ENCODE measurements at regions of chr2 and their contacts with region 1.

Region 1: DNA sequence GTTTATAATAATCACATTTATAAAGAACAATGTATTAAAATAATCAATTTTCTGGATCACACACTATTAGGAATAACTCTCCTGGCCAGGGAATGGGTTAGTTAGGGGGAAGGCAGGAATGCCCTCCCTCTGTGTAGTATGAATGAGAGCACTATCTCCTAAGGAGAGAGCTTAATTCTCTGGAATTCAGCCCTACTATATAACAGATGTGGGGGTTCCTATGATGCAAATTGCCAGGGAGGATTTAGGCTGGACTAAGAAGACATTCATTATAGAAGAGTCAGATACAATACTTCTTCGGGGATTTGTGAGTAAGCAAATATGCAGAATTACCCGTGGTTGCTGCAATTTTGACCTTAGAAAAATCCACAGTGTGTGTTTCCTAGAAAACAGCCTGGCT is 250.1 kb upstream of the VRK2 start:
- H3K4me3 ChIP-seq: no peak overlapping the region
- H3K27ac ChIP-seq: no peak overlapping the region
- H3K4me1 ChIP-seq: no peaks in the 10 kb centered on the region
- CTCF ChIP-seq: no peak

Region 2: GRCh38 chr2:58460670-58461069 is 664.1 kb after region 1 on chr2:
- CTCF ChIA-PET with region 1: no interaction called
- POLR2A ChIA-PET with region 1: interaction called, 10 read pairs
- H3K4me3 ChIP-seq: no peak overlapping the region
- H3K27ac ChIP-seq: no peak overlapping the region
- H3K4me1 ChIP-seq: no peaks in the 10 kb centered on the region
- CTCF ChIP-seq: no peak